OCI-LY7 (cell line): ENCODE measurements at regions of chr9 and their contacts with region 1.

Region 1: GRCh38 chr9:123544007-123544827 is 188.2 kb downstream of the CRB2 start:
- DNase-seq: peak; percentile 55
- H3K4me3 ChIP-seq: no peak overlapping the region
- H3K27ac ChIP-seq: no peak overlapping the region
- H3K4me1 ChIP-seq: no peaks in the 10 kb centered on the region
- CTCF ChIP-seq: peak; percentile 100

Region 2: DNA sequence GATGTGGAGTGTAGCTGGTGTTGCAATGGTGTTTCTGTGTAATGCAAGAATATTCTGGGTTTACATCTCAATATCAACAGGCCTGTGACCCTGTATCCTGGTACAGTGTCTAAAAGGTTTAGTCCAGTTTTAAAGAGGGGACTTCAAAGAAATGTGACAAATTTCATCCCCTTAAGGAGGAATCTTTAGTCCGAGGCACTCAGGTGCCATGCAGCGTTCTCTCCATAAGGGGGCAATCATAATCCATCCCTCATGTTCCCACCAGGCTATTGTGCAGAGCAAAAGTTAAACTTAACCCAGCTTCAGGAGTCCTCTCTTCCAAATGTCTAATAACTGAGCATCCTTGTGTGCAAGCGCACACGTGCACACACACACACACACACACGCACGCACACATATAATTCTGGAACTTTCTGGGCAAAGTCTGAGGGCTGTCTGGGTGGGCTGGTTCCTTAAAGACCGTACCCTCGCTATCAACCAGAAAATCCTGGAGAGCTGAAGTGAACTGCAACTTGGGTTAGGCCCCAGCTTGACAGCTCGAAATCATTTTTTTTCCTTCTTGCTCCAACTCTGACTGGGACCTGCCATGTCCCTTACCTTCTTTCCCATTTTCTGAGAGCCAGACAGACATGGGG is 142.2 kb before region 1 on chr9:
- CTCF ChIA-PET with region 1: no interaction called
- POLR2A ChIA-PET with region 1: interaction called, 4 read pairs
- intact Hi-C with region 1: loop called (anchors 5 kb)
- DNase-seq: peak; percentile 55
- H3K4me3 ChIP-seq: no peak overlapping the region
- H3K27ac ChIP-seq: no peak overlapping the region
- H3K4me1 ChIP-seq: no peaks in the 10 kb centered on the region
- CTCF ChIP-seq: peak; percentile 86

Region 3: DNA sequence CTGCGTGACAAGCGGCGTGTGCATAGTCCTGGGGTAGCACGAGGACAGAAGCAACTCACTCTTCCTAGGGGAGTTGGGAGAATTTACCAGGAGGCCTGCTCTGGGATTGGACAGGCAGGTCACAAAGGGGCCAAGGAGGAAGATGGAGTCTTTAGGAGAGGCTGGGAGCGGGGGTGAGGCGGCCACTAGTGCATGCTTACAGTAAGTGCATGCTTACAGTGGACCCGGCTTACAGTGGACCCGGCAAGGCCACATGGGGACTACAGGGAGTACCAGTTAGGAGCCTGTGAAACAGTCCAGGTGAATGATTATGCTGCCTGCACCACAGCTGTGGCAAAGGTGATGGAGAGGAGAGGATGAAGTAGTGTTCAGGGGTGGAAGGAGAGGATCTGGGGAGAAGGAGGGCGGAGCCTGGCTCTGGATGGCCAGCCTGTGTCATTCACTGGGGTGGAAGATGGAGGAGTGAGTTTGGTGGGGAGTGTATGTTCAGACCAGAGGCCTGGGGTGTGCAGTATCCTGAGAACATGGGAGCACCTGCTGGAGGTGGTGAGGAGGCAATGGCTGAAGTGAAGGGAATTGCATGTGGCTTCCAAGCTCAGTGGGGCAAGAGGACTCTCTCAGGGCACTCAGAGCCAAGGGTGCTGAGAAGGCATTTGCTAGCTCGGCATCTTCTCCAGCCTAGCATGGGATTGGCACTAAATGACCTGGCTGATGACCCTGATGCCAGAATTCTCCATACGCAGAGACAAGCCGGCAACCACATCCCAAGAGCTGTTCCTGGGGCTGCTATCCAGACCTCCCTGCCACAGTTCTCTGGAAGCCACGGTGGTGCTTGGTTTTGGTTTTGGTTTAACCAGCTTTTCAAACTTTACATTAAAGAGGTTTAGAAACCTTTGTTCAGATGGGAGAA is 109.3 kb before region 1 on chr9:
- CTCF ChIA-PET with region 1: no interaction called
- POLR2A ChIA-PET with region 1: no interaction called
- intact Hi-C with region 1: no loop called
- DNase-seq: no peak
- H3K4me3 ChIP-seq: no peak overlapping the region
- H3K27ac ChIP-seq: no peak overlapping the region
- H3K4me1 ChIP-seq: no peaks in the 10 kb centered on the region
- CTCF ChIP-seq: no peak